ENCODE measurements at regions of chr7 and their contacts with region 1.

Region 1: GRCh38 chr7:87886875-87887274 is 10.6 kb downstream of the DBF4 start:
- DNase-seq: no peak
- H3K4me3 ChIP-seq: no peak overlapping the region
- H3K27ac ChIP-seq: no peak overlapping the region
- H3K4me1 ChIP-seq: no peaks in the 10 kb centered on the region
- H3K27me3 ChIP-seq: no peaks in the 10 kb centered on the region
- CTCF ChIP-seq: peak in 2 of 3 experiments; percentile 23 to 58

Region 2: DNA sequence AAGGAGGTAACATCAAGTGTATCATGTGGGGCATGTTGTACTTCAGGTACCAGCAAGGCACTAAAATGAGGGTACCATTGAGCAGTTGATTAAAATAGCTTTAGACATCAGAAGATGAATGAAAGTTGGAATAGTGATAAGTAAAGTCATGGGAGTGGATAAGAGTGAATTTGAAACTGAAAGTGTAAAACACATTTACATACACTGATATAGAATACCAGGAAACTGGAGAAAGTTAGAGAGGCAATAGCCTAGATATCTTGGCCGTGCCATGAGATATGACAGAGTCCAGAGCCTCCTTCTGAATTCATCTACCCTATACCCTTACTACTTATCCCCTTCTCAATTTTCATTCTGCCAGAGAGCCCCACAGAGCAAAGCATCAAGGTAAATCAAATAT is 1166.6 kb before region 1 on chr7:
- intact Hi-C with region 1: no loop called
- DNase-seq: no peak
- H3K4me3 ChIP-seq: no peak overlapping the region
- H3K27ac ChIP-seq: no peak overlapping the region
- H3K4me1 ChIP-seq: no peaks in the 10 kb centered on the region
- H3K27me3 ChIP-seq: no peaks in the 10 kb centered on the region
- CTCF ChIP-seq: no peak

Region 3: DNA sequence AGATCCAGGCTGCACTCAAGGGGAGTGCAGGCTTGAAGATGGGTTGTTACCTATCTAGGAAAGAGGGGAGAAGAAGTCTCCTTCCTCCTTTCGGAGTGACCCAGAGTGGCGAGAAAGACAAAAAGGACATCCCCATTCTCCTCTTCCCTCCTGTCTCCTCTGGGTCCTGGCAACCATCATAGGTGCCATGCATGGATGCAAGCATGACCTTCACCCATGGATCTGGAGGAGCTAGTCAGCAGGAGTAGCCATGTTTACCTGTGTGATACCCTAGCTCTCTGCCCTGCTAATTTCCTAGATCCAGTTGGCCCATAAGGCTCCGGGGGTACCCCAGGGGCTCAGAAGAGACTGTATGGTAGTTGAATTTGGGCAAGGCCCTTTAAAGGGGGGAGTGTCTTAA is 558.6 kb before region 1 on chr7:
- intact Hi-C with region 1: loop called (anchors 10 kb)
- DNase-seq: no peak
- H3K4me3 ChIP-seq: no peak overlapping the region
- H3K27ac ChIP-seq: no peak overlapping the region
- H3K4me1 ChIP-seq: no peaks in the 10 kb centered on the region
- H3K27me3 ChIP-seq: no peaks in the 10 kb centered on the region
- CTCF ChIP-seq: no peak

Region 4: GRCh38 chr7:87767797-87768196 is 119.1 kb before region 1 on chr7:
- intact Hi-C with region 1: no loop called
- DNase-seq: no peak
- H3K4me3 ChIP-seq: no peak overlapping the region
- H3K27ac ChIP-seq: no peak overlapping the region
- H3K4me1 ChIP-seq: no peaks in the 10 kb centered on the region
- H3K27me3 ChIP-seq: no peaks in the 10 kb centered on the region
- CTCF ChIP-seq: no peak

Region 5: DNA sequence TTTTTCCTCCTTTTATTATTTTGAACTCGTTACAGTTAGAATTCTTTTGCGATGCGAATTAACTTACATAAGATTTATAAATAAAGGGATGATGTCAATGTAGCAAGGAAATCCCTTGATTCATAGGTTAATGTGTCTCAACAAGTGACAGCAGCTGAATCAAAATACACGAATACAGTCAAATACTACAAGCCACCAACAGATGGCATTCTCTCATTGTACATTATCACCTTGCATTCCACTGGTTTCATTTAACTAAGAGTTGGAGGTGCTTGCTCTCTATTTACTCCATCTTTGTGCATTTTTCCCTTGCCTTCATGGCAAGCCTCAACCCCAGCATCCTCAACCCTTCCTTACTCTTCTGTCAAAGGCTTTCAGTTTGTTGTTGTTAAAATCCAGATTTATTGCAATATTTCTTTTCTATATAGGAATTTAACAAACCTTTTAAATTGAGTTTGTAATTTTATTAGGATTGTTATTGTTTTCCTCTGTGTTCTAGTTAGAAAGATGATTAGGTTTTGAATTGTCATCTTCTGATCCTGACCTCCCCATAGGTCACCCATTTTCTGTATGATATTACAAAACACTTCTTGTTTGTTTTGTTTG is 89.0 kb before region 1 on chr7:
- intact Hi-C with region 1: loop called (anchors 2 kb)
- DNase-seq: no peak
- H3K4me3 ChIP-seq: no peak overlapping the region
- H3K27ac ChIP-seq: no peak overlapping the region
- H3K4me1 ChIP-seq: no peaks in the 10 kb centered on the region
- H3K27me3 ChIP-seq: no peaks in the 10 kb centered on the region
- CTCF ChIP-seq: peak in 2 of 3 experiments; percentile 20 to 44

Region 6: GRCh38 chr7:87810130-87810529 is 76.7 kb before region 1 on chr7:
- intact Hi-C with region 1: no loop called
- DNase-seq: no peak
- H3K4me3 ChIP-seq: no peak overlapping the region
- H3K27ac ChIP-seq: no peak overlapping the region
- H3K4me1 ChIP-seq: no peaks in the 10 kb centered on the region
- H3K27me3 ChIP-seq: no peaks in the 10 kb centered on the region
- CTCF ChIP-seq: no peak

Measured in ascending aorta (tissue), 2 donors.